T-cell (primary cell): ENCODE measurements at regions of chr5 and their contacts with region 1.

Region 1: GRCh38 chr5:59188419-59189225 is 605.7 kb downstream of the RAB3C start:
- DNase-seq: peak; percentile 6 to 81 (median 46)
- ATAC-seq: peak; percentile 59 to 73 (median 68)
- H3K4me3 ChIP-seq: peak overlapping the region in 1 of 2 donors; percentile 26
- H3K4me3 Mint-ChIP-seq: peak overlapping the region in 1 of 3 donors; percentile 3
- H3K27ac ChIP-seq: no peak overlapping the region
- H3K27ac Mint-ChIP-seq: peak overlapping the region in 1 of 2 donors; percentile 44
- H3K4me1 ChIP-seq: peaks cover 0 to 2% of the 10 kb centered on the region in 2 experiments
- H3K4me1 Mint-ChIP-seq: peaks cover 4 to 7% (median 6%) of the 10 kb centered on the region in 3 donors
- H3K27me3 ChIP-seq: peaks cover 0 to 9% of the 10 kb centered on the region in 2 experiments
- H3K27me3 Mint-ChIP-seq: peaks cover 11 to 19% of the 10 kb centered on the region in 2 donors

Region 2: DNA sequence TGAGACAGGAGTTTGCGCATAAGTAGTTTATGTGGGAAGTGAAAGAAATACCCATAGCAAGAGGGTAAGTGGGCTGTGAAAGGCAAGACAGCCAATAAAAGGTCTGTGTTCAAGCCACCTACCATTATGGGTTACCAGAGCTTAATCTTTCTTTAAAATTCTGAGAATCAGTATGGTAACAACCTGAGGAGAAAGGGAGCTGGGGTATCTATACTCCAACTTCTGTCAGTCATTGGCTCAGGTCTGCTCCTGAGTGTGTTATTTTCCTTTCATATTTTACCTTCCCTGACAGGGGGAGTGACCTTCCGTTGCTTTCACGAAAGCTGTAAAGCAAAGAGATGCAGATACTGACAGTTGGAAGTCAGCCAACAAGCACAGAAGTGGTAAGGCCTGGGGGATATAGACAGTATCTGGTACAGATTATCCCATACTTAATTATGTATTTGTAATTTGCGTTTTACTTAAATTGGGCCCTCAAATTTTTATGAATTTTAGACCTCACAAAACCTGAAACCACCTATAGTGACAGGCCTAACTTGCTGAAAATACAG is 372.4 kb before region 1 on chr5:
- CTCF ChIA-PET with region 1: no interaction called
- POLR2A ChIA-PET with region 1: no interaction called
- DNase-seq: no peak
- ATAC-seq: no peak
- H3K4me3 ChIP-seq: no peak overlapping the region
- H3K4me3 Mint-ChIP-seq: no peak overlapping the region
- H3K27ac ChIP-seq: no peak overlapping the region
- H3K27ac Mint-ChIP-seq: no peak overlapping the region
- H3K4me1 ChIP-seq: no peaks in the 10 kb centered on the region
- H3K4me1 Mint-ChIP-seq: no peaks in the 10 kb centered on the region
- H3K27me3 ChIP-seq: no peaks in the 10 kb centered on the region
- H3K27me3 Mint-ChIP-seq: no peaks in the 10 kb centered on the region

Region 3: DNA sequence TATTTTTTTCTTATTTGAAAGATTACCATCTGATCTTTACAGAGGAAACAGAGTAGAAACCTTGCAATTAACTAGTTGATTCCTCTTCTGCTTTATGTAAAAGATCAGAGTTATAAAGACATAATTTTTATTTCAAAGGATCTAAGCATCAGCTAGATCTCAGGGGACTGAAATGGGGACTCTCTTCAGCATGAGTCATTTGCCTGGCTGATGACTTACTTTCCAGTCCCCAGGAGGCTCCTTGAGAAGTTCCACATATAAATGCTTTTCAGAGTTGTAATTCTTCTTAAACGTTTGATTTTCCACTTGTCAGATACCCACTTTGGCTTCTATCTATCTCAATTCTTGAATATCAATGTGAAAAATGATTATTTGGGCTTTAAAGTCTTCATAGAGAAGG is 216.3 kb before region 1 on chr5:
- CTCF ChIA-PET with region 1: no interaction called
- POLR2A ChIA-PET with region 1: no interaction called
- DNase-seq: no peak
- ATAC-seq: no peak
- H3K4me3 ChIP-seq: no peak overlapping the region
- H3K4me3 Mint-ChIP-seq: no peak overlapping the region
- H3K27ac ChIP-seq: no peak overlapping the region
- H3K27ac Mint-ChIP-seq: no peak overlapping the region
- H3K4me1 ChIP-seq: no peaks in the 10 kb centered on the region
- H3K4me1 Mint-ChIP-seq: peaks cover 0 to 5% (median 4%) of the 10 kb centered on the region in 3 donors
- H3K27me3 ChIP-seq: no peaks in the 10 kb centered on the region
- H3K27me3 Mint-ChIP-seq: no peaks in the 10 kb centered on the region

Region 4: GRCh38 chr5:59209758-59210359 is 21.2 kb after region 1 on chr5:
- CTCF ChIA-PET with region 1: no interaction called
- POLR2A ChIA-PET with region 1: no interaction called
- DNase-seq: no peak
- ATAC-seq: no peak
- H3K4me3 ChIP-seq: no peak overlapping the region
- H3K4me3 Mint-ChIP-seq: no peak overlapping the region
- H3K27ac ChIP-seq: no peak overlapping the region
- H3K27ac Mint-ChIP-seq: no peak overlapping the region
- H3K4me1 ChIP-seq: no peaks in the 10 kb centered on the region
- H3K4me1 Mint-ChIP-seq: no peaks in the 10 kb centered on the region
- H3K27me3 ChIP-seq: peaks cover 0 to 2% of the 10 kb centered on the region in 2 experiments
- H3K27me3 Mint-ChIP-seq: peaks cover 15 to 23% of the 10 kb centered on the region in 2 donors

Region 5: DNA sequence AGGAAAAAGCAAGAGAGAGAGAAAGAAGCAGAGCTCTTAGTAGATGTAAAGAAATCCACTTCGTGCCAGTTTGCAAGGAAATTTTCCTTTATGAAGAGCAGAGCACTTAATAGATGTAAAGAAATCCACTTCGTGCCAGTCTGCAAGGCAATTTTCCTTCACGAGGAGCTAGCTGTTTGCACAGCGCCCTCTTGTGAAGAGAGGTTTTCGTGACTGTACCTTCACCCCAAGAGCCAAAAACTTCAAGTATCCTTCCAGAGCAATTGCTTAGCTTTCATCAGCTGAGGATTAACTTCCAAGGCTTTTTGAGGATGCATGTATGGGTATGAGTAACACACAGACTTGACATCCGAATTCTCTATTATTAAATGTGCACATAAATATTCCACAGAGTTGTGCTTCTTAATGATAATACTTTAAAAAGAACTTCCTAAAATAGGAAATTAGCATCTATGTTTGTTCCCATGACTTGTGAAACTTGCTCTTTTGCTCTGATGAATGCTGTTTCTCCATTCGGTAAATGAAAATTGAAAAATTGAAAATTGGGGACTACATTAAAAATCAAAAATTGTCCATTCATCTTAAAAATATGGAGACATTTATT is 179.3 kb after region 1 on chr5:
- CTCF ChIA-PET with region 1: interaction called, 15 to 22 read pairs
- POLR2A ChIA-PET with region 1: no interaction called
- DNase-seq: peak in 29 of 35 experiments; percentile 1 to 64 (median 19)
- ATAC-seq: peak in 1 of 4 experiments; percentile 50
- H3K4me3 ChIP-seq: no peak overlapping the region
- H3K4me3 Mint-ChIP-seq: no peak overlapping the region
- H3K27ac ChIP-seq: no peak overlapping the region
- H3K27ac Mint-ChIP-seq: no peak overlapping the region
- H3K4me1 ChIP-seq: no peaks in the 10 kb centered on the region
- H3K4me1 Mint-ChIP-seq: peaks cover 0 to 2% (median 2%) of the 10 kb centered on the region in 3 donors
- H3K27me3 ChIP-seq: peaks cover 0 to 5% of the 10 kb centered on the region in 2 experiments
- H3K27me3 Mint-ChIP-seq: peaks cover 11 to 17% of the 10 kb centered on the region in 2 donors

Region 6: DNA sequence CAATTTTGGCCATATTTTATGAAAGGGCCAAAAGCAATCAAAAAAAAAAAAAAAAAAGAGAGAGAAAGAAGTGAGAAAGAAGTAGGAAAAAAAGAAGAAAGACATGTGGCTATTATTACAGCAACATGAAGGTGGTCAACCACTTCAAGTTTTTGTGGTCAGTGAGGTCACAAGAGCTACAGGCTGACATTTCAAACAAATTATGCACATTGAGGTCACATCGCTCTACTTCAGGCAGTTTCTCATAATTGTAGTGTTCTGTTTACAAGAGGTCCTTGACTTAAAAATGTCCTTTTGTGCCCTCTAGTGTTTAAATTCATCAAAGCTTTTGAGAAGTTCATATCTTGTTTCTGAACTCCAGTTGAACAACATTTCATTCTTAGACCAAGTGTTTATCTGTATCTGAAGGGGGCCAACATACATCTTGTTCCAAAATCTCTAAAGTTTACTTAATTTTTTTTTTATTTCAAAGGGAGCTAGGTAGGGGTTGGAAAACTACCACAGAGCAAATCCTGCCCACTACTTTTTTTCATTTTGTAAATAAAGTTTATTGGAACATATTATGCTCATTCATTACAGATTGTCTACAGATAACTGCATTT is 191.8 kb after region 1 on chr5:
- CTCF ChIA-PET with region 1: interaction called, 41 to 42 read pairs
- POLR2A ChIA-PET with region 1: no interaction called
- DNase-seq: peak in 2 of 35 experiments; percentile 2 to 61
- ATAC-seq: peak; percentile 50 to 56 (median 54)
- H3K4me3 ChIP-seq: no peak overlapping the region
- H3K4me3 Mint-ChIP-seq: no peak overlapping the region
- H3K27ac ChIP-seq: no peak overlapping the region
- H3K27ac Mint-ChIP-seq: no peak overlapping the region
- H3K4me1 ChIP-seq: no peaks in the 10 kb centered on the region
- H3K4me1 Mint-ChIP-seq: peaks cover 0 to 4% (median 1%) of the 10 kb centered on the region in 3 donors
- H3K27me3 ChIP-seq: no peaks in the 10 kb centered on the region
- H3K27me3 Mint-ChIP-seq: no peaks in the 10 kb centered on the region